ENCODE measurements at regions of chr5 and their contacts with region 1.

Region 1: GRCh38 chr5:39217365-39218281 is 1.7 kb downstream of the FYB1 start:
- DNase-seq: peak; percentile 64 to 84 (median 68)
- ATAC-seq: peak; percentile 93
- H3K4me3 ChIP-seq: peak overlapping the region in 1 of 2 donors; percentile 53
- H3K27ac ChIP-seq: peak overlapping the region in 1 of 2 donors; percentile 87
- H3K4me1 ChIP-seq: peaks cover 0 to 70% of the 10 kb centered on the region in 2 donors
- H3K27me3 ChIP-seq: no peaks in the 10 kb centered on the region
- CTCF ChIP-seq: peak; percentile 93 to 98

Region 2: GRCh38 chr5:39283231-39283818 is 65.7 kb after region 1 on chr5:
- intact Hi-C with region 1: loop called in 1 of 2 experiments (anchors 10 kb)
- DNase-seq: peak in 2 of 4 donors; percentile 20 to 56
- ATAC-seq: peak; percentile 96
- H3K4me3 ChIP-seq: no peak overlapping the region
- H3K27ac ChIP-seq: no peak overlapping the region
- H3K4me1 ChIP-seq: peaks cover 0 to 13% of the 10 kb centered on the region in 2 donors
- H3K27me3 ChIP-seq: no peaks in the 10 kb centered on the region
- CTCF ChIP-seq: peak; percentile 59 to 61

Measured in left lung (tissue), 14 donors.